Activated B cell treated with CpG ODN at 0.5 μM for 24 hours (primary cell): ENCODE measurements at regions of chr2 and their contacts with region 1.

Region 1: GRCh38 chr2:233556756-233557736 is 9.5 kb downstream of the USP40 start:
- DNase-seq: no peak
- ATAC-seq: no peak
- H3K4me3 Mint-ChIP-seq: no peak overlapping the region
- H3K27ac Mint-ChIP-seq: peak overlapping the region; percentile 18
- H3K4me1 Mint-ChIP-seq: peaks cover 6% of the 10 kb centered on the region
- H3K27me3 Mint-ChIP-seq: no peaks in the 10 kb centered on the region
- CTCF ChIP-seq: no peak

Region 2: DNA sequence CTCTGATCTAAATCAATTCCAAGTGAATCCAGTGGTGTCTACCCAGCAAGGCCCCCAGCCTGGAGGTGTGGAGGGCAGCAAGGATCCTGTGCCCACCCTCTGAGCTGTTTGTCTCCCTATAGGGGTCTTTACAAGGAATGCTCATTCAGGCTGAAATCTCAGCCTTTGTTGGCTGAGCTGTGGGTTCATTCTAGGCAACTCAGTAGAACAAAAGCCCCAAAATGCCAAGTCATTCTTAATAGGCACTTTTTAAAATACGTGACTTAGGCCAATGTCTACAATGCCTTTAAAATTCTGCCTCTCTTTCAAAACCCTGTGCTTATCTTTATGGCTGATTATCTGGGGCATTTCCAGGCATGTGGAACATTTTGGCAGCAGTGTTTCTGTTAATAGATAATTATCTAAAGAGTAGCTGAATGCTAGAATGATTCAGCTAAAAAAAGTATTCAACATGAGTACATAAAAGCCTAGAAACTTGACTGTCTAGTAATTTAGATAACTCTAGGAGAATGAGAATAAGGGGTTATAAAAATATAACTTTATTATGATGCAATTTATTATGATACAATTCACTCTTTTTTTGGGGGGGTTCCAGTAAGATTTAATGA is 143.1 kb after region 1 on chr2:
- CTCF ChIA-PET with region 1: no interaction called
- POLR2A ChIA-PET with region 1: no interaction called
- intact Hi-C with region 1: loop called (anchors 10 kb)
- DNase-seq: no peak
- ATAC-seq: no peak
- H3K4me3 Mint-ChIP-seq: no peak overlapping the region
- H3K27ac Mint-ChIP-seq: no peak overlapping the region
- H3K4me1 Mint-ChIP-seq: no peaks in the 10 kb centered on the region
- H3K27me3 Mint-ChIP-seq: peaks cover 5% of the 10 kb centered on the region
- CTCF ChIP-seq: no peak